ENCODE measurements at regions of chr1 and their contacts with region 1.

Region 1: DNA sequence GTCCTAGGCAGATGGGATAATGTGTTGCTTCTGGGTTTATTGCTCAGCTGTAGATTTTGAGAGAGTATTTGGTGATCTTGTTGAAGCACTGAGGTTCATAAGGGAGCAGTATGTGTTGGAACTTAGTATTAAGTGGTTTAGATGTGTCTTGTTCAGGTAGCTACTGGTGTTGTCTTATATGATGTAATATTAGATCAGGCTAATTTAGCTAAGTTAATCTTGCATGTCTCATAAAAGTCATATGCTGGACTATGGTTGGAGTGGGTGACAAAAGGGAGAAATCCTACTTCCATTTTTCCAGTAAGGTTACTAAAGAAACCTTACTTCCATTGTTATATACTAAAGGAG is 196.4 kb downstream of the CLEC20A start:
- DNase-seq: no peak
- H3K4me3 ChIP-seq: no peak overlapping the region
- H3K27ac ChIP-seq: peak overlapping the region; percentile 52
- H3K4me1 ChIP-seq: peaks cover 10% of the 10 kb centered on the region
- H3K27me3 ChIP-seq: no peaks in the 10 kb centered on the region
- CTCF ChIP-seq: no peak

Region 2: GRCh38 chr1:178501705-178502329 is 201.5 kb after region 1 on chr1:
- CTCF ChIA-PET with region 1: interaction called, 7 read pairs
- POLR2A ChIA-PET with region 1: no interaction called
- intact Hi-C with region 1: loop called (anchors 5 kb)
- DNase-seq: peak; percentile 76
- H3K4me3 ChIP-seq: no peak overlapping the region
- H3K27ac ChIP-seq: no peak overlapping the region
- H3K4me1 ChIP-seq: no peaks in the 10 kb centered on the region
- H3K27me3 ChIP-seq: no peaks in the 10 kb centered on the region
- CTCF ChIP-seq: peak; percentile 91

Region 3: DNA sequence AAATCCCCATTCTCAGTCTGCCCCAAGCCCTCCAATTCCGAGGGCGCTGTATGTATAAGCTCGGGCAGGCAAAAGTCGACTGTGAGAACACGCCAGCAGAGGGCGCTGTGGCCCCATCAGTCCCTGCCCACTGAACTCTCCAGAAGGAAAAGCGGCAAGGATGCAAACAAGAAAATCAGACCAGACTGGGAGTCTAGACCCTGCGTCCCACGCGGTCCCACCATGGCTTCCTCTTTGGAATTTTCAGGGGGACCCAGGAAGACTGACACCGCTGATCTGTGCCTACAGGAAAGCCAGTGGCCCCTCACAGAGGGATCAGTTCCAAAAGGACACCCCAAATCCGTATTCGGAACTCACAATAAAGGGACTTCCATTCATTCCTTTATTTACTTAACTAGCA is 232.1 kb after region 1 on chr1:
- CTCF ChIA-PET with region 1: no interaction called
- POLR2A ChIA-PET with region 1: interaction called, 3 read pairs
- intact Hi-C with region 1: loop called (anchors 5 kb)
- DNase-seq: peak; percentile 86
- H3K4me3 ChIP-seq: no peak overlapping the region
- H3K27ac ChIP-seq: no peak overlapping the region
- H3K4me1 ChIP-seq: peaks cover 11% of the 10 kb centered on the region
- H3K27me3 ChIP-seq: no peaks in the 10 kb centered on the region
- CTCF ChIP-seq: peak; percentile 97